Head of caudate nucleus (tissue), 42 donors: ENCODE measurements at regions of chr5 and their contacts with region 1.

Region 1: DNA sequence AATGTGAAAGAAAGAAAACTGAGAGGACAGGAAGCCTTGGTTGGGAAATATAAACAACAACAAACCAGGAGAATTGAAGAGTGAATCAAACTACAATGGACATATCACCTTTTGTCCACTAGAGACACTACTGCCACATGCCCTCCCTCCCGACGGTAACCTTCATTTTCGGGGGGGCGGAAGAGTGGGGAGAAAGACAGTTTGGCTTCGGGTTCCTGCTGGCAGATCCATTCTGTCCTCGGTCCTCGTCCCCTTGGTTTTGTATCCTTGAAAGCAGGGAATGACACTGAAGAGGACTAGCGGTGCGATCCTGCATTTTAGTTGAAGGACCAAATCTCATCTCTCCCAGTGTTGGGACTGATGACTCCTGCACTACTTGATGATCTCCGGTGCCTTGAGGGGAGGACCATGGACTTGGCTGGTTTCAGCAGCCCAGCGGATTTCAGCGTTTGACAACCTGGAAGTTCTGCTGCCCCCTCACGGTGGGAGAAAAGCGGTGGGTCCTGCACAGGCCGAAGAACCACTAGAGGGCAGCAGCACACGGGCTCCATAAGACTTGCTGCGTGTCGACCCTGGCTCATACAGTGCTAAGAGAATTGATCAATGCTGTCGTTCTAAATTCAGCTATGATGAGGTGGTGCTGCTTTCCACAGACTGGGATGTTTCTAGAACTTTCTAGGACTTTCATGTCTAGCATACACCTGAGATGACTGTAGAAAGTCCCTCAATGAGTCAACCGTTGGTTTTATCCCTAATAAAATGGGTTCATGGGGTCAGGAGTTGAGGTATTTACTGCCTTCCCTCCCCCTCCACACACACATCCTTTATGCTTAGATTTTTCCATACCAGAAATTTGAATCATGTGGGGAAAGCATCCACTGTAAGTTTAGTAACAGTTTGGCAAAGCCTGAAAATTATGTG is 15.1 kb upstream of the ZNF131 start:
- DNase-seq: peak; percentile 77 to 95 (median 89)

Region 2: DNA sequence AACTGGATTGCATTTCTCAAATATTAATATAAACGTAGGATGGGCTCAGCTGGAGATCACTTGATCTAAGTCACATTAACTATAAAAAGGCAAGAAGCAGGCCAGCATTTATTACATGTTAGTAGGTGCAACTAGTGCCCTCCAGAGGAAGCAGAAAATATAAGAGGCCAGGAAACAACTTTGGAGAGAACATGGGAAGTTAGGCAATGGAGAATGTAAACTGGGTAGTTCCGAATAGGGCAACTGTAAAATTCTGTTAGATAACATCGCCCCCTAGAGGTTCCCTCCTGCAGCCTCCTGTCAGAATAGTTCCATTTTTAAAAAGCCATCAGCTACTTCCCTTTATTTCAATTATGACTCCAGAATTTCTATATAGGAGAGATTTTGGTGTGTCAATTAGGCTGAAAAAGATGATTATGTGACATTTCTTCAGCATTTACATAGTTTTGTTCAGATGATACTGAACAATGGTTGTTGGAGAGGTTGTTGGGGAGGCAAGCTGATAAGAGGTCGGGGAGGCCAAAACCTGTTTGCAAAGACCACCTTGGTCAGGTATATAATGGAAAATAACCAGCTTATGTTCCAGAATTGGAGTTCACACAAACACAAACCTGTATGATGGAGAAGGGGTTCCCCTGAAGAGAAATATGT is 284.2 kb after region 1 on chr5:
- intact Hi-C with region 1: loop called (anchors 10 kb)
- DNase-seq: peak in 39 of 42 donors; percentile 4 to 85 (median 62)